AG04450 (cell line): ENCODE measurements at regions of chr14 and their contacts with region 1.

Region 1: DNA sequence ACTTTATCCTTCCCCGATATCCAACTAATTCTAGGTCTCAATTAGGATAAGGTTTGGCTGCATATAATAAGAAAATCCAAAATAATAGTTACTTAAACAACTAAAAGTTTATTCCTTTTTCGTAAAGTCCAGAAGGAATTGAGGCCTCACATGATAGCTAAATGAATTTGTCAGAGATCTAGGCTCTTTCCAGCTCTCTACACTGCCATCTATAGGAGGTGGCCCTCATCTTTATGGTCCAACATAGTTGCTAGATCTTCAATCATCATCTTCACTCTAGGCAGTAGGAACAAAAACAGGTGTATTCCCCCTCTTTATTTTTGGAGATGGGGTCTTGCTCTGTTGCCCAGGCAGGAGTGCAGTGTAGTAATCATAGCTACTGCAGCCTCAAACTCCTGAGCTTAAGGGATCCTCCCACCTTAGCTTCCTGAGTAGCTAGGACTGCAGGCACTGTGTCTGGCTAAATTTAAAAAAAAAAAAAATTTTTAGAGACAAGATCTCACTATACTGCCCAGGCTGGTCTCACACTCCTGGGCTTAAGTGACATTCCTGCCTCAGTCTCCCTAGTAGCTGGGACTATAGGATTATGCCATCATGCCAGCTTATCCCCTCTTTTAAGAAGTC is 46.5 kb upstream of the SAV1 start:
- DNase-seq: no peak
- H3K4me3 ChIP-seq: no peak overlapping the region
- H3K27ac ChIP-seq: no peak overlapping the region
- H3K27me3 ChIP-seq: no peaks in the 10 kb centered on the region
- CTCF ChIP-seq: peak; percentile 71

Region 2: GRCh38 chr14:50542941-50543418 is 171.6 kb before region 1 on chr14:
- CTCF ChIA-PET with region 1: interaction called, 11 read pairs
- POLR2A ChIA-PET with region 1: no interaction called
- DNase-seq: no peak
- H3K4me3 ChIP-seq: no peak overlapping the region
- H3K27ac ChIP-seq: no peak overlapping the region
- H3K27me3 ChIP-seq: peaks cover 2% of the 10 kb centered on the region
- CTCF ChIP-seq: peak; percentile 60

Region 3: GRCh38 chr14:50619556-50620141 is 94.9 kb before region 1 on chr14:
- CTCF ChIA-PET with region 1: interaction called, 16 read pairs
- POLR2A ChIA-PET with region 1: no interaction called
- DNase-seq: no peak
- H3K4me3 ChIP-seq: no peak overlapping the region
- H3K27ac ChIP-seq: no peak overlapping the region
- H3K27me3 ChIP-seq: no peaks in the 10 kb centered on the region
- CTCF ChIP-seq: peak; percentile 71

Region 4: DNA sequence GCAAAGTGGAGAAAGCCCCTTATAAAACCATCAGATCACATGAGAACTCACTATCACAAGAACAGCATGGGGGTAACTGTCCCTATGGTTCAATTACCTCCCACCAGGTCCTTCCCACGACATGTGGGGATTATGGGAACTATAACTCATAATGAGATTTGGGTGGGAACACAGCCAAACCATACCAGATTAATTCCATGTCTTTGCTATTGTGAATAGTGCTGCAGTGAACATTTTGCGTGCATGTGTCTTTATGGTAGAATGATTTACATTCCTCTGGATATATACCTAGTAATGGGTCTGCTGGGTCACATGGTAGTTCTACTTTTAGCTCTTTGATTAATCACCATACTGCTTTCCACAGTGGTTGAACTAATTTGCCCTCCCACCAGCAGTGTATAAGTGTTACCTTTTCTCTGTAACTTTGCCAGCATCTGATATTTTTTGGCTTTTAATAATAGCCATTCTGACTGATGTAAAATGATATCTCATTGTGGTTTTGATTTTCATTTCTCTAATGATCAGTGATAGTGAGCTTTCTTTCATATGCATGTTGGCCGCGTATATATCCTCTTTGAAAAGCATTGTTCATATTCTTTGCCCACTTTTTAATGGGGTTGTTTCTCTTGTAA is 16.8 kb before region 1 on chr14:
- CTCF ChIA-PET with region 1: interaction called, 10 read pairs
- POLR2A ChIA-PET with region 1: no interaction called
- DNase-seq: no peak
- H3K4me3 ChIP-seq: no peak overlapping the region
- H3K27ac ChIP-seq: no peak overlapping the region
- H3K27me3 ChIP-seq: peaks cover 3% of the 10 kb centered on the region
- CTCF ChIP-seq: no peak

Region 5: GRCh38 chr14:50726372-50727107 is 12.0 kb after region 1 on chr14:
- CTCF ChIA-PET with region 1: interaction called, 42 read pairs
- POLR2A ChIA-PET with region 1: no interaction called
- DNase-seq: peak; percentile 55
- H3K4me3 ChIP-seq: no peak overlapping the region
- H3K27ac ChIP-seq: no peak overlapping the region
- H3K27me3 ChIP-seq: no peaks in the 10 kb centered on the region
- CTCF ChIP-seq: no peak

Region 6: GRCh38 chr14:50750323-50750722 is 35.8 kb after region 1 on chr14:
- CTCF ChIA-PET with region 1: no interaction called
- POLR2A ChIA-PET with region 1: no interaction called
- DNase-seq: no peak
- H3K4me3 ChIP-seq: no peak overlapping the region
- H3K27ac ChIP-seq: no peak overlapping the region
- H3K27me3 ChIP-seq: no peaks in the 10 kb centered on the region
- CTCF ChIP-seq: no peak

Region 7: GRCh38 chr14:50762001-50762930 is 47.7 kb after region 1 on chr14:
- CTCF ChIA-PET with region 1: interaction called, 10 read pairs
- POLR2A ChIA-PET with region 1: interaction called, 4 read pairs
- DNase-seq: peak; percentile 38
- H3K4me3 ChIP-seq: no peak overlapping the region
- H3K27ac ChIP-seq: no peak overlapping the region
- H3K27me3 ChIP-seq: no peaks in the 10 kb centered on the region
- CTCF ChIP-seq: no peak